Right ventricle myocardium inferior (tissue), 1 donor: ENCODE measurements at regions of chr7 and their contacts with region 1.

Region 1: GRCh38 chr7:71272509-71273490 is 140.9 kb downstream of the GALNT17 start:
- DNase-seq: no peak
- ATAC-seq: peak; percentile 64

Region 2: GRCh38 chr7:71237945-71238344 is 34.9 kb before region 1 on chr7:
- intact Hi-C with region 1: loop called (anchors 5 kb)
- DNase-seq: no peak
- ATAC-seq: peak; percentile 90